ENCODE measurements at regions of chr18 and their contacts with region 1.

Region 1: GRCh38 chr18:60684843-60685513 is 312.4 kb upstream of the MC4R start:
- DNase-seq: peak in 1 of 2 experiments; percentile 32
- H3K4me3 ChIP-seq: no peak overlapping the region
- H3K4me1 ChIP-seq: no peaks in the 10 kb centered on the region
- H3K27me3 ChIP-seq: no peaks in the 10 kb centered on the region

Region 2: GRCh38 chr18:61502472-61502871 is 817.5 kb after region 1 on chr18:
- in situ Hi-C with region 1: loop called (anchors 25 kb)
- DNase-seq: peak; percentile 75 to 77
- H3K4me3 ChIP-seq: no peak overlapping the region
- H3K4me1 ChIP-seq: peaks cover 16% of the 10 kb centered on the region
- H3K27me3 ChIP-seq: 0 out of 2 replicates have a peak, but pooled peaks cover 3% of the 10 kb centered on the region

Measured in HAP-1 (cell line).